CD8-positive, alpha-beta T cell (primary cell): ENCODE measurements at regions of chr12 and their contacts with region 1.

Region 1: GRCh38 chr12:47207340-47207717 is 127.6 kb upstream of the AMIGO2 start:
- DNase-seq: peak in 5 of 9 experiments; percentile 38 to 78 (median 60)
- ATAC-seq: peak; percentile 40
- H3K4me3 ChIP-seq: peak overlapping the region; percentile 19 to 33
- H3K4me3 Mint-ChIP-seq: peak overlapping the region; percentile 71
- H3K27ac ChIP-seq: peak overlapping the region; percentile 8 to 80
- H3K27ac Mint-ChIP-seq: peak overlapping the region; percentile 92
- H3K4me1 ChIP-seq: peaks cover 75% of the 10 kb centered on the region
- H3K4me1 Mint-ChIP-seq: peaks cover 77% of the 10 kb centered on the region
- H3K27me3 ChIP-seq: no peaks in the 10 kb centered on the region
- H3K27me3 Mint-ChIP-seq: no peaks in the 10 kb centered on the region
- CTCF ChIP-seq: no peak

Region 2: DNA sequence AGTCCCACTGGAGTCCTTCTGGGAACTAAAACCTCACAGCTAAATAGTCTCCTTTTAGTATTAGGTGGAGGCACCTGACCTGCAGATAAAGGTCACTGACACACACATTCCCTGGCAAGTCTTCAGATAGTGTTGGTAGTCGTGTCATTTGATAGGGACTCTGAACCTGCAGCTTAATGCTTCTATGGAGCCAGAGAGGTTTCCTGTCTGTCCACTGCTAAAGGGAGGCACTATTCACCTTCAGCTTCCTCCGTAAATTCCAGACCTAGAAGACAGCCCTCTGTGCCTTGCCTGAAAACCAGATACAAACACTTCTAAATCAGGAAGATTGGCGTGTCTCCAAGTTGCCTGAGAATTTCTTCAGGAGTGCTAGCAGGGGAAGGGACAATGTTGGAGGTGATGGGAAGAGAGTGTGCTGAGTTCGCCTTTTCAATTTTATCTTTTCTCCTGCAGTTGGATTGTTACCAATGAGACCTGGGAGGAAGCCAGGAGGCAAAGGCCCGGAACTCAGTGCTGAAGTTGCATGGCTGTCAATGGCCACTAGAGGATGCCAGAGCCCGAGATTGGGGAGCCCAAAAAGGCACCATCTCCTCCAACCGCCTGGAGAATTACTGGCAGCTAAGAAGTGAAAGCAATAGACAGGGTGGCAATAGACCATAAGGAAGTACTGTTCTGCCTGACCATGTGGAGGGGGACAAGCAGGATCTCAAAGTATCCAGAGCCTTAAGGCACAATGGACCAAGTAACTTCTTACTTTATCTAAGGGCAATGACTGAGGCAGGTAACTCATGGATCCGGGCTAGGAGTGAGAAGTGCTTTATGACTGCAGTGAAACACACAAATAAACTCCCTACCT is 1135.3 kb before region 1 on chr12:
- CTCF ChIA-PET with region 1: no interaction called
- POLR2A ChIA-PET with region 1: no interaction called
- intact Hi-C with region 1: no loop called
- DNase-seq: peak; percentile 27 to 75 (median 57)
- ATAC-seq: peak; percentile 89
- H3K4me3 ChIP-seq: no peak overlapping the region
- H3K4me3 Mint-ChIP-seq: no peak overlapping the region
- H3K27ac ChIP-seq: no peak overlapping the region
- H3K27ac Mint-ChIP-seq: no peak overlapping the region
- H3K4me1 ChIP-seq: no peaks in the 10 kb centered on the region
- H3K4me1 Mint-ChIP-seq: no peaks in the 10 kb centered on the region
- H3K27me3 ChIP-seq: no peaks in the 10 kb centered on the region
- H3K27me3 Mint-ChIP-seq: peaks cover 7% of the 10 kb centered on the region
- CTCF ChIP-seq: peak; percentile 88

Region 3: DNA sequence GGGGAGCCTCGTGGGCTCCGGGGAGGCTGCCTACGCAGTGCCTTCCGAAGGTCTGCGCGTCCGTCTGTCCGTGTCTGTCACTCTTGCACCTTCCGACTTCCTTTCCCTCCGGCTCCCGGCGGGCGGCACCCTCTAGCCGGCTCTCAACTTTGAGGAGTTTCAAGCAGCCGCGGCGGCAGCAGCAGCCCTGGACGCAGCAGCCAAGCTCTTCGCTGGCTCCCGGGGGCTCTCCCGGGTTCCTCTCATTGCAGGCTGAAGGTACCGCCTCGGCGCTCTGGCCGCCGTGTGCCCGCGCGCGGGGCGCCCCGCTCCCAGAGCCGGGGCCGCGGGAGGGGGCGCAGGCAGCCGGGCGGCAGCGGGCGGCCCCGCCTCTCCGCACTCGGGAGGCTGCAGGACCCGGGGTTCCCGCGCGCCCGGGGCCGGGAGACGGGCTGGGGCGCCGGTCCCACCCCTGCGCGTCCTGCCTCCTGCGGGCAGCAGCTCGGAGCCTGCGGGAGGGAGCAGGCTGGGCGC is 127.8 kb before region 1 on chr12 and contains the starts of genes AMIGO2 and PCED1B:
- CTCF ChIA-PET with region 1: interaction called, 4 read pairs
- POLR2A ChIA-PET with region 1: interaction called, 55 read pairs
- intact Hi-C with region 1: no loop called
- DNase-seq: peak; percentile 13 to 81 (median 69)
- ATAC-seq: peak; percentile 54
- H3K4me3 ChIP-seq: peak within 1 kb of the TSS; percentile 85 to 92
- H3K4me3 Mint-ChIP-seq: peak within 1 kb of the TSS; percentile 98
- H3K27ac ChIP-seq: peak within 1 kb of the TSS; percentile 63 to 85
- H3K27ac Mint-ChIP-seq: peak within 1 kb of the TSS; percentile 96
- H3K4me1 ChIP-seq: peaks cover 55% of the 10 kb centered on the region
- H3K4me1 Mint-ChIP-seq: peaks cover 76% of the 10 kb centered on the region
- H3K27me3 ChIP-seq: no peaks in the 10 kb centered on the region
- H3K27me3 Mint-ChIP-seq: no peaks in the 10 kb centered on the region
- CTCF ChIP-seq: no peak
- total RNA-seq, gene AMIGO2: 12.5 to 13.5 TPM
- total RNA-seq, gene PCED1B: 32.9 to 33.7 TPM

Region 4: GRCh38 chr12:47178014-47178413 is 29.3 kb before region 1 on chr12:
- CTCF ChIA-PET with region 1: no interaction called
- POLR2A ChIA-PET with region 1: no interaction called
- intact Hi-C with region 1: no loop called
- DNase-seq: peak in 1 of 9 experiments; percentile 12
- ATAC-seq: no peak
- H3K4me3 ChIP-seq: no peak overlapping the region
- H3K4me3 Mint-ChIP-seq: no peak overlapping the region
- H3K27ac ChIP-seq: no peak overlapping the region
- H3K27ac Mint-ChIP-seq: no peak overlapping the region
- H3K4me1 ChIP-seq: no peaks in the 10 kb centered on the region
- H3K4me1 Mint-ChIP-seq: peaks cover 39% of the 10 kb centered on the region
- H3K27me3 ChIP-seq: no peaks in the 10 kb centered on the region
- H3K27me3 Mint-ChIP-seq: no peaks in the 10 kb centered on the region
- CTCF ChIP-seq: no peak

Region 5: GRCh38 chr12:47190271-47190750 is 17.0 kb before region 1 on chr12:
- CTCF ChIA-PET with region 1: interaction called, 30 read pairs
- POLR2A ChIA-PET with region 1: interaction called, 35 read pairs
- intact Hi-C with region 1: loop called (anchors 2 kb)
- DNase-seq: peak in 1 of 9 experiments; percentile 25
- ATAC-seq: no peak
- H3K4me3 ChIP-seq: no peak overlapping the region
- H3K4me3 Mint-ChIP-seq: peak overlapping the region; percentile 63
- H3K27ac ChIP-seq: peak overlapping the region in 1 of 2 experiments; percentile 69
- H3K27ac Mint-ChIP-seq: peak overlapping the region; percentile 89
- H3K4me1 ChIP-seq: peaks cover 85% of the 10 kb centered on the region
- H3K4me1 Mint-ChIP-seq: peaks cover 88% of the 10 kb centered on the region
- H3K27me3 ChIP-seq: no peaks in the 10 kb centered on the region
- H3K27me3 Mint-ChIP-seq: no peaks in the 10 kb centered on the region
- CTCF ChIP-seq: no peak

Region 6: GRCh38 chr12:47223848-47224213 is 16.5 kb after region 1 on chr12:
- CTCF ChIA-PET with region 1: interaction called, 5 read pairs
- POLR2A ChIA-PET with region 1: interaction called, 24 read pairs
- intact Hi-C with region 1: loop called in 1 of 2 experiments (anchors 2 kb)
- DNase-seq: no peak
- ATAC-seq: no peak
- H3K4me3 ChIP-seq: peak overlapping the region; percentile 16 to 31
- H3K4me3 Mint-ChIP-seq: peak overlapping the region; percentile 83
- H3K27ac ChIP-seq: peak overlapping the region in 1 of 2 experiments; percentile 64
- H3K27ac Mint-ChIP-seq: peak overlapping the region; percentile 97
- H3K4me1 ChIP-seq: peaks cover 58% of the 10 kb centered on the region
- H3K4me1 Mint-ChIP-seq: peaks cover 83% of the 10 kb centered on the region
- H3K27me3 ChIP-seq: no peaks in the 10 kb centered on the region
- H3K27me3 Mint-ChIP-seq: no peaks in the 10 kb centered on the region
- CTCF ChIP-seq: no peak

Region 7: GRCh38 chr12:47276621-47277309 is 69.4 kb after region 1 on chr12:
- CTCF ChIA-PET with region 1: interaction called, 4 read pairs
- POLR2A ChIA-PET with region 1: interaction called, 10 read pairs
- intact Hi-C with region 1: loop called in 1 of 2 experiments (anchors 2 kb)
- DNase-seq: peak; percentile 35 to 91 (median 62)
- ATAC-seq: peak; percentile 94
- H3K4me3 ChIP-seq: peak overlapping the region in 1 of 2 experiments; percentile 25
- H3K4me3 Mint-ChIP-seq: peak overlapping the region; percentile 67
- H3K27ac ChIP-seq: peak overlapping the region; percentile 64 to 91
- H3K27ac Mint-ChIP-seq: peak overlapping the region; percentile 97
- H3K4me1 ChIP-seq: peaks cover 67% of the 10 kb centered on the region
- H3K4me1 Mint-ChIP-seq: peaks cover 80% of the 10 kb centered on the region
- H3K27me3 ChIP-seq: no peaks in the 10 kb centered on the region
- H3K27me3 Mint-ChIP-seq: no peaks in the 10 kb centered on the region
- CTCF ChIP-seq: no peak

Region 8: DNA sequence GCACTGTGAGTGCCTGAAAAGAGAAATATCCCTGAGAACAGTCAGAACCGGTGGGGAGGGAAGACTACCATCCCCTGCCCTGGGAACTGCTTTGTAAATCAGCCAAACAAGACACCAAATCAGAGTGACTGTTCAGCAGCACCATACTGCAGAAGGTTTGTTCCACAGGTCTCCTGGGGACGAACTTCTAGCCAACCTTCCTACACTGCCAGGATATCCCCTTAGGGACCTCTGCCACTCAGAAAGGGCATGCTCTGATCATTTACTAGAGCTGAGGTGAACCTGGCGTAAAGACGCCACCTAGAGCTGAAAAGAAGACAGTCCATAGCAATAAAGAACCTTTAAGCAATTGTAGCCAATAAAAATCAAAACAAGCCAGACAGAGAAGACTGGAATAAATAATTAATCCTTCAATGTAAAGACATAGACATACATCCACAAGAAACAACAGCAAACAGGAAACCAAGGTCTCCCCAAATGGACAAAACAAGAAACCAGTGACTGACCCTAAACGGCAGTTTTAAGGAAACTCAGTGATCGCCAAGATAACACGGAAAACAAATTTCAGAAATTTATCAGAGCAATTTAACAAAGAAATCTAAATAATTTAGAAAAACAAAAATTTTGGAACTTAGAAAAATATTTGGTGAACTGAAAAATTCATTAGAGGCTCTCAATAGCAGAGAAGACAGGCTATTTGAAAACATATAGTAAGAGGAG is 100.5 kb after region 1 on chr12:
- CTCF ChIA-PET with region 1: interaction called, 11 read pairs
- POLR2A ChIA-PET with region 1: interaction called, 19 read pairs
- intact Hi-C with region 1: no loop called
- DNase-seq: peak; percentile 21 to 81 (median 56)
- ATAC-seq: peak; percentile 91
- H3K4me3 ChIP-seq: peak overlapping the region; percentile 37 to 46
- H3K4me3 Mint-ChIP-seq: peak overlapping the region; percentile 81
- H3K27ac ChIP-seq: peak overlapping the region; percentile 21 to 25
- H3K27ac Mint-ChIP-seq: peak overlapping the region; percentile 88
- H3K4me1 ChIP-seq: peaks cover 12% of the 10 kb centered on the region
- H3K4me1 Mint-ChIP-seq: peaks cover 47% of the 10 kb centered on the region
- H3K27me3 ChIP-seq: no peaks in the 10 kb centered on the region
- H3K27me3 Mint-ChIP-seq: no peaks in the 10 kb centered on the region
- CTCF ChIP-seq: peak; percentile 60

Region 9: GRCh38 chr12:47812797-47813510 is 605.6 kb after region 1 on chr12:
- CTCF ChIA-PET with region 1: no interaction called
- POLR2A ChIA-PET with region 1: no interaction called
- intact Hi-C with region 1: loop called (anchors 10 kb)
- DNase-seq: peak; percentile 77 to 95 (median 92)
- ATAC-seq: peak; percentile 73
- H3K4me3 ChIP-seq: peak overlapping the region; percentile 44 to 59
- H3K4me3 Mint-ChIP-seq: peak overlapping the region; percentile 82
- H3K27ac ChIP-seq: peak overlapping the region; percentile 65 to 73
- H3K27ac Mint-ChIP-seq: peak overlapping the region; percentile 97
- H3K4me1 ChIP-seq: peaks cover 95% of the 10 kb centered on the region
- H3K4me1 Mint-ChIP-seq: peaks cover 93% of the 10 kb centered on the region
- H3K27me3 ChIP-seq: no peaks in the 10 kb centered on the region
- H3K27me3 Mint-ChIP-seq: no peaks in the 10 kb centered on the region
- CTCF ChIP-seq: no peak